HAP-1 (cell line): ENCODE measurements at regions of chr17 and their contacts with region 1.

Region 1: GRCh38 chr17:74961657-74962490 is 10.7 kb downstream of the HID1 start:
- DNase-seq: peak; percentile 87 to 95
- H3K4me3 ChIP-seq: no peak overlapping the region
- H3K4me1 ChIP-seq: peaks cover 3% of the 10 kb centered on the region
- H3K27me3 ChIP-seq: no peaks in the 10 kb centered on the region

Region 2: GRCh38 chr17:74790161-74791054 is 171.5 kb before region 1 on chr17:
- in situ Hi-C with region 1: loop called (anchors 5 kb)
- DNase-seq: no peak
- H3K4me3 ChIP-seq: no peak overlapping the region
- H3K4me1 ChIP-seq: no peaks in the 10 kb centered on the region
- H3K27me3 ChIP-seq: no peaks in the 10 kb centered on the region

Region 3: DNA sequence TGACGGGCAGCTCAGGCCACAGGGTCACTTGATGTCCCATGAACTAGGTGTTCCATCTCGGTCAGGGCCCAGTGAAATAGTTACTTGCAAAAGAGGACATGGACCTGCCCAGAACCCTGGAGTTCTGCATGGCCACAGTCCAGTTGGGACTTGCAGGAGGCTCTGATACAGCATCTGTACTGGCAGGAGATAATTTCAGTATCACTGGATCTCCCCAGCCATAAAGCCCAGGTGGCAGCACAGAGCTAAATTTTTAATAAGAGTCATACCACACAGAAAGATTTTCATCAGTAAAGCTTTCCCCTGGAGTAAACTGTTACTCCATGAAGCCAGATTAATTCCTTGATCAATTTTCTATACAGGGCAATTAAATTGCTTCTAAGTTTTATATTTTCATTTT is 107.9 kb after region 1 on chr17:
- in situ Hi-C with region 1: no loop called
- DNase-seq: no peak
- H3K4me3 ChIP-seq: no peak overlapping the region
- H3K4me1 ChIP-seq: no peaks in the 10 kb centered on the region
- H3K27me3 ChIP-seq: no peaks in the 10 kb centered on the region